Activated CD4-positive, alpha-beta T cell treated with anti-CD3 and anti-CD28 coated beads, Interleukin-2, amount 10 ng/mL, durations not matched to agents 7 days and 5 days (primary cell): ENCODE measurements at regions of chr3 and their contacts with region 1.

Region 1: DNA sequence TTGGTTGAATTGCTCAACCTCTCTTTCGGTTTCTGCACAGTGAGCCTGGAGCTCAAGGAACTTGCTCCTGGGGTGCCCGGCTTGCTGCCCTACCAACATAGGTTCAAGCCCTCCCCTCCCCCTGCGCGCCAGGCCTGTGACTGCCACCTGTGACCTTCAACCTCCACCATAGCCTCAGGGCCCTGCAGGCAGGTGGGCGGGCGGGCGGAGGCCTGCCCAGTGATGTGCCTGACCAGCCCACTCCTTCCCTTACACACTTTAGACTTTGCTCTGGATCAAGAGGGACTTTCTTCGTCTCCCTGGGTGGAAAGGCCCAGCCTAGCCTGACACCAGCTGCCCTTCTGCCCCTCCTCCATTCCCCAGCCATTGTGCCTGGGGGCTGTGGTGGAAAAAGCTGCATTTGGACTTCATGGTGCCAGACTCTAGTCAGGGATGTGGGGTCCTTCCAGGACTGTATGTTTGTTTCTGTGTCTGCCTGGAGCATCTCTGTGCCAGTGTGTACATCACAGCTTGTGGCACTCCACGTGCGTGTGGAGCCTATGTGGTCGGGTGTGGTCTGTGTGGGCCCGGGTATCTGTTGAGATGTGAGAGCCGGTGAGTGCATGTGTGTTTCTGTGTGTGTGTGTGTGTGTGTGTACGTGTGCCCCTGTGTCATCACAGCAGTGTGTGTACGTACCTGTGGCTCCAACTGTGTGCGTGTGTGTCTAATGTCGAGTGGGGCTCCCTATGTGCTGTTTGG is 9.5 kb downstream of the PRKCD start:
- DNase-seq: peak; percentile 41
- H3K4me3 Mint-ChIP-seq: no peak overlapping the region
- H3K27ac Mint-ChIP-seq: no peak overlapping the region
- H3K4me1 Mint-ChIP-seq: peaks cover 40% of the 10 kb centered on the region
- H3K27me3 Mint-ChIP-seq: no peaks in the 10 kb centered on the region

Region 2: DNA sequence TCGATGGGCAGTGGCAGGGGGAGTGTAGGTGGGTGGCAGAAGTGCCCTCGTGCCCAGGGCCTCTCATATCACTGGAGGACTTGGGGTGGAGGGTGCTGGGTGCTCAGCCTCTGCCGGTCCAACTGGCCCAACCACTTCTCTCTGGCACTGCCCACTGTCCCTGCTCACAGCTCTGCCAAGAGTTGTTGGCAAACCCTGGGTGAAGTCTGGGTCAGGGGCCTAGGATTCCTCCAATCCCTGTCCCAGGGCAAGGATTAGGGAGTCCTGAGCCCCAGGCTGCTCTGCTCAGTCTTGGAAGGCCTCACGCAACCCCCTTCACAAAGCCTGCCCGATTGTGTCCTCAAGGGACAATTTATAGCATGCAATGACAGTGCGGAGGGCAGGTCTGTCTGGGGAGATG is 14.7 kb before region 1 on chr3:
- CTCF ChIA-PET with region 1: interaction called, 11 read pairs
- POLR2A ChIA-PET with region 1: no interaction called
- DNase-seq: no peak
- H3K4me3 Mint-ChIP-seq: no peak overlapping the region
- H3K27ac Mint-ChIP-seq: no peak overlapping the region
- H3K4me1 Mint-ChIP-seq: peaks cover 7% of the 10 kb centered on the region
- H3K27me3 Mint-ChIP-seq: peaks cover 55% of the 10 kb centered on the region

Region 3: DNA sequence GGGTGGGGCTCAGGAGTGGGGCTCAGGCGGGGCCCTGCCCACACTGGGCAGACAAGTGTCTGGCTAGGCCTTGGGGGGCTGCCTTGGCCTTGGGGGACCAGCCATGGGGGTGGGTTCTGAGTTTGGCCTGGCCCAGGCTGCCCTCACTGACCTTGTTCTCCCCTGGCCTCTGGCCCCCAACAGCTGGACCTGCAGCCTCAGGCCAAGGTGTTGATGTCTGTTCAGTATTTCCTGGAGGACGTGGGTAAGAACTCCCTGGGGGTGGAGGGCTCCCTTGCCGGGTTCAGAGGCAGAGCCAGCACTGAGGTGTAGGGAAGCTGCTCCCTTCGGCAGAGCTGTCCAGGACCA is 10.5 kb after region 1 on chr3:
- CTCF ChIA-PET with region 1: no interaction called
- POLR2A ChIA-PET with region 1: no interaction called
- DNase-seq: no peak
- H3K4me3 Mint-ChIP-seq: no peak overlapping the region
- H3K27ac Mint-ChIP-seq: no peak overlapping the region
- H3K4me1 Mint-ChIP-seq: no peaks in the 10 kb centered on the region
- H3K27me3 Mint-ChIP-seq: no peaks in the 10 kb centered on the region

Region 4: GRCh38 chr3:53240989-53241972 is 70.8 kb after region 1 on chr3:
- CTCF ChIA-PET with region 1: no interaction called
- POLR2A ChIA-PET with region 1: no interaction called
- DNase-seq: no peak
- H3K4me3 Mint-ChIP-seq: no peak overlapping the region
- H3K27ac Mint-ChIP-seq: no peak overlapping the region
- H3K4me1 Mint-ChIP-seq: peaks cover 10% of the 10 kb centered on the region
- H3K27me3 Mint-ChIP-seq: no peaks in the 10 kb centered on the region